ENCODE measurements at regions of chr19 and their contacts with region 1.

Region 1: DNA sequence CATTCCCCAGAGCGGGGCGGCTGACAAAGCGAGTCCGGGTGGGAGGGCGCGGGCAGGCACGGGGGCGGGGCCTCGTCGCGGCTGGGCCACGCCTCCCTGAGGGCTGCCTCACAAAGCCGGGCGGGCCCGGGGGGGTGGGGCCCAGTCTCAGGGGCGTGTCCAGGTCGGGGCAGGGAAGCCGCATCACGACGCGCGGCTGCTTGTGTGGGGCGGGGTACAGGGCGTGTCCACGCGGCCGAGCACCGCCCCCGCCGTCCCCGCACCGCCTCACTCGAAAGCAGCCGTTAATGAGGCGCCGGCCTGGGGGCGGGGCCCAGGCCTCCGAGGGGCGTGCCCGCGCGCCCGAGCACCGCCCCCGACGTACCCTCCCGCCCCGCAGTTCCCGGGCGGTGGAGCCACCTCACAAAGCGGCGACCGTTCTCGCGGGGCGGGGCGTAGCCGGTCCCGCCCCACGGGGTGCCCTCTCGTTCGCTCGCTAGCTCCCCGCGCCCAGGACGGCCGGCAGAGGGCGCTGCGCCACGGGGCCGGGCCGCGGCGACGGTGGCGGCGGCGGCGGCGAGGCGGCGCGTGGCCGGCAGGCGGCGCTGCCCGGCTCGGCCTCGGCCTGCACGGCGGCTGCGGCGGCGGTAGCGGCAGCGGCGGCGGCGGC is at the start of gene CARM1:
- DNase-seq: peak; percentile 99
- H3K4me3 Mint-ChIP-seq: peak within 1 kb of the TSS; percentile 77
- H3K27ac Mint-ChIP-seq: peak within 1 kb of the TSS; percentile 88
- H3K4me1 Mint-ChIP-seq: peaks cover 34% of the 10 kb centered on the region
- H3K27me3 Mint-ChIP-seq: no peaks in the 10 kb centered on the region
- total RNA-seq, gene CARM1: 32.4 to 34.3 TPM

Region 2: GRCh38 chr19:10769533-10770491 is 101.3 kb before region 1 on chr19:
- CTCF ChIA-PET with region 1: no interaction called
- POLR2A ChIA-PET with region 1: interaction called, 11 read pairs
- DNase-seq: peak; percentile 39
- H3K4me3 Mint-ChIP-seq: no peak overlapping the region
- H3K27ac Mint-ChIP-seq: peak overlapping the region; percentile 81
- H3K4me1 Mint-ChIP-seq: peaks cover 50% of the 10 kb centered on the region
- H3K27me3 Mint-ChIP-seq: no peaks in the 10 kb centered on the region

Region 3: GRCh38 chr19:10820173-10820572 is 50.9 kb before region 1 on chr19:
- CTCF ChIA-PET with region 1: no interaction called
- POLR2A ChIA-PET with region 1: no interaction called
- DNase-seq: no peak
- H3K4me3 Mint-ChIP-seq: no peak overlapping the region
- H3K27ac Mint-ChIP-seq: no peak overlapping the region
- H3K4me1 Mint-ChIP-seq: peaks cover 15% of the 10 kb centered on the region
- H3K27me3 Mint-ChIP-seq: no peaks in the 10 kb centered on the region

Region 4: DNA sequence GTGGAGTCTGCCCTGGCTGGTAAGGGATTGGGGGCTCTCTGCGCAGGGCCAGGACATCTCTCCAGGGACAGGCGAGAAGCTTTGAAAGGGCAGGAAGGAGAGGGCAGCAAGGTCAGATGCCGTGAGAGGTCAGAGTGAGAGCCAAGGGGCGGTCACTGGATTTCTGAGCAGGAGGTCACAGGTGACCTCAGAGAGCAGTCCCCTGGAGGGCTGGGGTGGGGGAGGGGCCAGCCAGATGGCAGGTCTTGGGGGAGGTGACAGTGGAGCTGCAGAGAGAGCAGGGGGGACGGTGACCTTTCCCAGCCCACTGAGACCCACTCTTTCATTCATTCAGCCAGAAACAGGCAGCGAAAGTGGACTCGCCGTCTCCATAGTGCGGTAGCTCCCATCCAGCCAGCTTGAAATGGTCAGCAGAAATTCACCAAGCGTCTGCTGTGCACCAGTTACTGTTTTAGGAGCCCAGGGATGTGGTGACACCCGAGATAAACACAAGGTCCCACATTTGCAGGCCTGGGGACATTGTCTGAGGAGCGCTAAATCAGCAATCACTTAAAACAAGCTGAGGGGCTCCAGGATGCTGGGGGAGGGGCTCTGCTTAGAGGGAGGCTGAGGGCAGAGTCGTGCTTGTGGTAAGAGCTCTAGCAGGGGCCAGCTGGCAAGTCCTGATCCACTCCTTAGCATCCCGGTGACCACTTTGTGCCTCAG is 10.5 kb after region 1 on chr19:
- CTCF ChIA-PET with region 1: interaction called, 11 read pairs
- POLR2A ChIA-PET with region 1: no interaction called
- DNase-seq: no peak
- H3K4me3 Mint-ChIP-seq: no peak overlapping the region
- H3K27ac Mint-ChIP-seq: no peak overlapping the region
- H3K4me1 Mint-ChIP-seq: peaks cover 25% of the 10 kb centered on the region
- H3K27me3 Mint-ChIP-seq: no peaks in the 10 kb centered on the region